AG04450 (cell line): ENCODE measurements at regions of chr6 and their contacts with region 1.

Region 1: GRCh38 chr6:17505062-17505476 is 95.0 kb upstream of the FAM8A1 start:
- DNase-seq: no peak
- H3K4me3 ChIP-seq: no peak overlapping the region
- H3K27ac ChIP-seq: no peak overlapping the region
- H3K27me3 ChIP-seq: no peaks in the 10 kb centered on the region
- CTCF ChIP-seq: peak; percentile 45

Region 2: DNA sequence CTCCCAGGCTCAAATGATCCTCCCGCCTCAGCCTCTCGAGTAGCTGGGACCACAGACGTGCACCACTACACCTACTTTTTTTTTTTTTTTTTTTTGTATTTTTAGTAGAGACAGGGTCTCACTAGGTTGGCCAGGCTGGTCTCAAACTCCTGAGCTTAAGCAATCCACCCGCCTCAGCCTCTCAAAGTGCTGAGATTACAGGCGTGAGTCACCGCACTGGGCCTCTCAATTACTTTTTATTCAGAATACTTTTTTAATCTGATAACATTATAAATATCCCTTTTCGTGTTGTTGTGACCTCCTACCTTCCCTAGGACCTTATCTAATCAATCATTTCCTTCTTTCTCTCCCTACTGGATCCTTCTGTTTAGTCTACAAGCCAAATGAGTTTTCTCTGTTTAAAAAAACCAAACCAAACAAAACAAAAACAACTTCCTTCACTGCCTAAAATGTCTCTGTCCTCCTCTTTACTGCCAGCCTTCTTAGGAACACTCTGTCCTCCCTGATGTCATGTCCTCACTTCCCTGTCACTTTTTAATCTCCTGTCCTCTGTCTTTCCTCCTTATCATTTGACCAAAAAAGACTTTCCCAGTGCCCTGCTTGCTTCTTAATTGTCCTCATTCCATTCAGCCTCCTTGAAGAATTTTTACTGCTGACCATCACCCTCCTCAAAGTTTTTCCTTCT is 26.7 kb before region 1 on chr6:
- CTCF ChIA-PET with region 1: no interaction called
- POLR2A ChIA-PET with region 1: no interaction called
- DNase-seq: no peak
- H3K4me3 ChIP-seq: no peak overlapping the region
- H3K27ac ChIP-seq: no peak overlapping the region
- H3K27me3 ChIP-seq: no peaks in the 10 kb centered on the region
- CTCF ChIP-seq: no peak

Region 3: DNA sequence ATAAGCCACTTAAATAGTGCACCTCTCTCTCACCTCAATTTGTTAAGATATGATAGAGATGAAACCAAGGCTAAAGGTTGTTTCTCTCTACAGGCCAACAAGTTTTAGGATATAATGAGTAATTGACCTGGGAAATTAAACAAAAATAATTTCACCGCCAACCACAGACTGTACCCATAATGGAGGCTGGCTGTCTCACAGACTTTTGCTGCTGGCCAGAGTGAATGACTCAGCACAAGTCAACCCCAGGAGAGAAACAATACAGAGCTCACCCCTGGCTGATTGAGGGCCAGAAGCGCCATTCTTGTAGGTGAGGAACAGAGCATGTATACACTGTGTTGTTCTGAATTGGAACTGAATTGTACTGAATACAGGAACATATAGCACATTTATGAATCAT is 11.8 kb before region 1 on chr6:
- CTCF ChIA-PET with region 1: interaction called, 11 read pairs
- POLR2A ChIA-PET with region 1: no interaction called
- DNase-seq: peak; percentile 30
- H3K4me3 ChIP-seq: no peak overlapping the region
- H3K27ac ChIP-seq: peak overlapping the region; percentile 63
- H3K27me3 ChIP-seq: no peaks in the 10 kb centered on the region
- CTCF ChIP-seq: no peak

Region 4: DNA sequence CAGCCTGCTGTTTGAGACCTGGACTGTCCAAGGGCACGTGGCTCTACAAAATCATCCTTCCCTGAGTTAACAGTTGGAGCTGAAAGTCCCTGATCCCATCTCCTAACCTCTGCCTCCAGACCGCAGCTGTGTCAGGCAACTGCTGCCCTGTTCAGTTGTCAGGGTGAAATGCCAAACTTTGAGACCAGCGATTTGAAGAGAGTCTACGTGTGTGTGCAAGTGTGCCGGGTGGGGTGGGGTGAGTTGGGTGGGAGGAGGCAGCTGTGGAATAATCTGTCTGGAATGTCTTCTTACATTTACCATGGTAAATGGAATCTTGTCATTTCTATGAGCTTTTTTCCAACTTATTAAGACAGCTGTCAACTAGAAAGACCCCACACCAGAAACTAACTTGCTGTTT is 14.1 kb after region 1 on chr6:
- CTCF ChIA-PET with region 1: no interaction called
- POLR2A ChIA-PET with region 1: no interaction called
- DNase-seq: no peak
- H3K4me3 ChIP-seq: no peak overlapping the region
- H3K27ac ChIP-seq: no peak overlapping the region
- H3K27me3 ChIP-seq: no peaks in the 10 kb centered on the region
- CTCF ChIP-seq: no peak